Endothelial cell of umbilical vein (primary cell): ENCODE measurements at regions of chr13 and their contacts with region 1.

Region 1: DNA sequence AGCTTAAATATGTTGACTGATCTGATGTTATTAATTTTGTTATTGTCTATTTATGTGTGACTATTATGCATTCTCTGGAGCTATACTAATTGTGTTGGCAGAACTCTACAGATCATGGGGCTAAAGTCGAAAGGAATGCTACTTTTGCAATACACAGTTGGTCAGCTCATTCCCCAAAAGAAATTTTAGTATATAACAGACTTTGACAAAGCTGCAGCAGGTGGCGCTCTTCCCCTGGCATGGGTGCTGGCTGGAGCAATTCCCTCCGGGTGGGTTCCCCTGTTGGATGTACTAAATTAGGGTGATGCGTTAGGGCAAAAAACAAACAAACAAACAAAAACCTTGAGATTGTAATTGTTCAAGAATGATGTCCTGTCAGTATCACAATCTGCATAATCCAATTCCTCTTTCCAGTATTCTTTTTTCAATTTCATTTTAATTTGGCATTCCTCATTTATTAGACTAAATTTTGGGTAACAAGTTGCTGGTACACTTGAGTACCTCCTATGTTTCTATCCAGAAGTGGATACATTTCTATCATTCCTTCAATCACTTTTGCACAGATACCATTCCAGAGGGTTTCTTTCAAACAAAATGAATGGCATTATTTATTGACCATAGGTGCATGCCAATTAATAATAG is 322.8 kb upstream of the EDNRB start:
- DNase-seq: peak; percentile 53
- H3K4me3 ChIP-seq: no peak overlapping the region
- H3K27ac ChIP-seq: no peak overlapping the region
- H3K4me1 ChIP-seq: no peaks in the 10 kb centered on the region
- H3K27me3 ChIP-seq: peaks cover 4% of the 10 kb centered on the region in 2 experiments
- CTCF ChIP-seq: peak; percentile 66 to 70
- POLR2A ChIP-seq: no peak

Region 2: DNA sequence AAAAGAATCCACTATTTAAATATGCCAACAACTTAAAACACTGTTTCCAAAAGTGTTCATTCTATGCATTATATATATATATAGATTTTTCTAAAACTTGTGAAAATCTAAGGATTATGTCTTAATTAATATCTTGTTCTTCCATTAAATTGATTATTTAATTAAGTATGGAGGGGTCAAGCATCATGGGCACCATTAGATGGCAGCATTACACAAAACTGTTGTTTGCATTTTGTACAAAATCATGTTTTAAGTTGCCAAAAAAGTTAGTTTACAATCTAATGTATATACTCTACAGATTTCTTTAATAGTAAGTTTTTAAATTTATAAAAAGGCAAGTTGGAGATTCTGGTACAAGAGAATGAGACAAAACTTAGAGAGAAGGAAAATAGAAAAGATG is 109.6 kb before region 1 on chr13:
- CTCF ChIA-PET with region 1: interaction called, 99 read pairs
- POLR2A ChIA-PET with region 1: no interaction called
- dilution Hi-C with region 1: no loop called
- intact Hi-C with region 1: loop called (anchors 1 kb)
- DNase-seq: peak; percentile 39
- H3K4me3 ChIP-seq: no peak overlapping the region
- H3K27ac ChIP-seq: no peak overlapping the region
- H3K4me1 ChIP-seq: no peaks in the 10 kb centered on the region
- H3K27me3 ChIP-seq: peaks cover 14% of the 10 kb centered on the region in 2 experiments
- CTCF ChIP-seq: peak; percentile 21 to 24
- POLR2A ChIP-seq: no peak

Region 3: DNA sequence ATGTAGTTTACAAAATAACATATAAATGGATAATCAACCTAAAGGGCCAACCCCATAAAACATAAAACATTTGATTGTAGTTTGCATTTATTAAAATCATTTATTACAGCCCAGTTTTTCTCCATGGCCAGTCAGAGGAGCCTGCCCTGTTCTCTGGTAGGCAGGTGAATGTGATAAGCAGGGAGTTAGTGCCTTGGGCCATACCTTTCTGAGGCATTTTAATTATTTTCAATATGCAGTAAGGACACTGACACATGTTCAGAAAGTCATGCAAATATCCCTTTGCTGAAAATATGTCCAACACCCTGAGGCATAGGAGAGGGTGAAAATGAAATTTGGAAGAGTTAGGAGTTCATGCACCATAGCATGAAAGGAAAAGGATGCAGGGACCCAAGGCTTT is 80.1 kb before region 1 on chr13:
- CTCF ChIA-PET with region 1: no interaction called
- POLR2A ChIA-PET with region 1: no interaction called
- dilution Hi-C with region 1: no loop called
- intact Hi-C with region 1: no loop called
- DNase-seq: no peak
- H3K4me3 ChIP-seq: no peak overlapping the region
- H3K27ac ChIP-seq: no peak overlapping the region
- H3K4me1 ChIP-seq: no peaks in the 10 kb centered on the region
- H3K27me3 ChIP-seq: no peaks in the 10 kb centered on the region
- CTCF ChIP-seq: no peak
- POLR2A ChIP-seq: no peak

Region 4: DNA sequence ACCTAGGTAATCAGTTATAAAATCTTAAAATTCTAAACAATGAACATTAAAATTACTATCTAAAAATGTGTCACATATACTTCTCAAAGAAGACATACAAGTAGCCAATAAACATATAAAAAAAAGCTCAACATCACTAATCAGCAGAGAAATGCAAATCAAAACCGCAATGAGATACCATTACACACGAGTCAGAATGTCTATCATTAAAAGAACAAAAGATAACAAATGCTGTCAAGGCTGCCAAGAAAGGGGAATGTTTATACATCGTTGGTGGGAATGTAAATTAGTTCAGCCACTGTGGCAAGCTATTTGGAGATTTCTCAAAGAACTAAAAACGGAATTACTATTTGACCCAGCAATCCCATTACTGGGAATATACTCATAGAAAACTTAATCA is 12.5 kb before region 1 on chr13:
- CTCF ChIA-PET with region 1: interaction called, 27 read pairs
- POLR2A ChIA-PET with region 1: no interaction called
- dilution Hi-C with region 1: no loop called
- intact Hi-C with region 1: no loop called
- DNase-seq: no peak
- H3K4me3 ChIP-seq: no peak overlapping the region
- H3K27ac ChIP-seq: no peak overlapping the region
- H3K4me1 ChIP-seq: no peaks in the 10 kb centered on the region
- H3K27me3 ChIP-seq: no peaks in the 10 kb centered on the region
- CTCF ChIP-seq: no peak
- POLR2A ChIP-seq: no peak

Region 5: GRCh38 chr13:78689011-78689410 is 447.6 kb after region 1 on chr13:
- CTCF ChIA-PET with region 1: interaction called, 7 read pairs
- POLR2A ChIA-PET with region 1: no interaction called
- dilution Hi-C with region 1: no loop called
- intact Hi-C with region 1: loop called (anchors 10 kb)
- DNase-seq: peak; percentile 18
- H3K4me3 ChIP-seq: no peak overlapping the region
- H3K27ac ChIP-seq: no peak overlapping the region
- H3K4me1 ChIP-seq: no peaks in the 10 kb centered on the region
- H3K27me3 ChIP-seq: no peaks in the 10 kb centered on the region
- CTCF ChIP-seq: peak in 1 of 2 donors; percentile 29
- POLR2A ChIP-seq: no peak

Region 6: DNA sequence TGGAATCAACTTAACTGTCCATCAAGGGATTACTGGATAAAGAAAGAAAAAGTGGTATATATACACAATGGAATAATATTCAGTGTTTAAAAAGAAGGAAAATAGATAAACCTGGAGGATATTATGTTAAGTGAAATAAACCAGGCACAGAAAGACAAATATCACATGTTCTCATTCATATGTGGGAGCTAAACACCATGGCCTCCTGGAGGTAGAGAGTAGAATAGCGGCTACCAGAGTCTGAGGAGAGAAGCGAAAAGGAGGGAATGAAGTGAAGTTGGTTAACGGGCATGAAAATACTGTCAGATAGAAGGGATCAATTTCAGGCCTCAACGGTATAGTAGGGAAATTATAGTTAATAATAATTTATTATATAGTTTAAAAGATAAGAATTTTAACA is 565.1 kb after region 1 on chr13:
- CTCF ChIA-PET with region 1: interaction called, 12 read pairs
- POLR2A ChIA-PET with region 1: no interaction called
- dilution Hi-C with region 1: no loop called
- intact Hi-C with region 1: loop called (anchors 2 kb)
- DNase-seq: peak; percentile 11
- H3K4me3 ChIP-seq: no peak overlapping the region
- H3K27ac ChIP-seq: no peak overlapping the region
- H3K4me1 ChIP-seq: no peaks in the 10 kb centered on the region
- H3K27me3 ChIP-seq: no peaks in the 10 kb centered on the region
- CTCF ChIP-seq: peak; percentile 5 to 51
- POLR2A ChIP-seq: no peak

Region 7: DNA sequence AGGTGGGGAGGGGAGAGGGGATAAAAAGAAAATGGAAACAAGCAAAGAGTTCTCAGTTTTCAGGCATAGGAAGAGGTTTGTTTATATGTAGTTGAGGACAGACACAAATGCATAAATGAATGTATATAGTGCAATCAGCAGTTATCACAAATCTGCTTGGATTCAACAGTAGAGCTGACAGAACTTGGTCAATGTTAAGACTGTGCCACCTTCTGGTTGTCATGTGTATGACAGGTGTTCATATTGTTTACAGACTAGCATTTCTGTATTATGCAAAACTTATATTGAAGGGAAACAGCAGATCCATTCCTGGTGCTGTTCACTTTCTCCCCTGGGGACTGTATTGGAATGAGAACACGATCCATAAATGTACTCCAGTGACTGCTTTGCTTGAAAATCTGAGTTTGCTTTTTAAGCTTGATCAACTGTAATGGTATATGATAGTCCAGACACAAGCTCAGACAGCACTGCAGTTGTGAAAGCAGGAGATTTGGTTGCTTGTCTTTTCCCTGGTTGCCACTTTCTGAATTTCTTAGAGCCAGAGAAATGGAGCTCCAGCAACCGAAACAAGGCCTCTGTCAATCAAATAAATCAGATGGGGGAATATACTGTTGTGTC is 737.1 kb after region 1 on chr13:
- CTCF ChIA-PET with region 1: interaction called, 244 read pairs
- POLR2A ChIA-PET with region 1: no interaction called
- dilution Hi-C with region 1: no loop called
- intact Hi-C with region 1: loop called (anchors 1 kb)
- DNase-seq: peak; percentile 70
- H3K4me3 ChIP-seq: no peak overlapping the region
- H3K27ac ChIP-seq: no peak overlapping the region
- H3K4me1 ChIP-seq: no peaks in the 10 kb centered on the region
- H3K27me3 ChIP-seq: no peaks in the 10 kb centered on the region
- CTCF ChIP-seq: peak; percentile 43 to 59
- POLR2A ChIP-seq: no peak